Naive thymus-derived CD4-positive, alpha-beta T cell (primary cell): ENCODE measurements at regions of chr17 and their contacts with region 1.

Region 1: DNA sequence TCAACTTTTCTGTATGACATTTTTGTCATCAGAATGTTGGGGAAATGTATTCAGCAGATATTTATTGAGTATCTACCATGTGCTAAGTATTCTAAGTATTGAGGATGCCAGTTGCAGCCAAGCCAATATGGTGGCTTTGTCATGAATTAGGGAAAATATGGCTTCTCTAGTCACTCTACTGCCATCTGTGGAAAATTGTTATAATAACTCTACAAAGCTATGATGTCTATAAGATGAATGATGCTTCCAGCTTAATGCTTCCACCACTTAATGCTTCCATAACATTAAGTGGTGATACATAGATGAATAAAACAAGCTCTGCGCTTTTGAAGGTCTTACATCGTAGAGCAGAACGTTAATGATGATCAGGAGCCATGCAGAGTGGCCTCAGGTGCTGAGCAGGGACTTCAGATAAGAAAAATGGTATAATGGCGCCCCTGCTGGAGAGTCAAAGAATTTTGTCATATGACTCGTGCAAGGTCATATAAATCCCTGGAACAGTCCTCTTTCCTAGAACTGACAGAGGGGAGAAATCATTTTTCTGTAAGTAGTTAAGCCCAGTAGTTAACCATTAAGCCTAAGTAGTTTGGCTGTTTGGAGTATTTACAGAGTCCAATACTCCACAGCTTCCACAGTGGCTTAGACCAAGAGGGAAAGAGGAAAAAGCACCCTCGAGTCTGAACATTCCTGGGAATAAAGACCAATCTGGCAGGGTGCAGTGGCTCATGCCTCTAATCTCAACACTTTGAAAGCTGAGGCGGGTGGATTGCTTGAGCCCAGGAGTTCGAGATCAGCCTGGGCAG is 2.7 kb upstream of the TMIGD1 start:
- DNase-seq: peak; percentile 22 to 80 (median 74)
- ATAC-seq: peak; percentile 63
- H3K4me3 ChIP-seq: no peak overlapping the region
- H3K4me3 Mint-ChIP-seq: no peak overlapping the region
- H3K27ac ChIP-seq: no peak overlapping the region
- H3K27ac Mint-ChIP-seq: peak overlapping the region in 5 of 9 donors; percentile 1 to 69 (median 16)
- H3K4me1 ChIP-seq: peaks cover 11 to 16% of the 10 kb centered on the region in 2 donors
- H3K4me1 Mint-ChIP-seq: peaks cover 13 to 43% (median 36%) of the 10 kb centered on the region in 7 donors
- H3K27me3 ChIP-seq: no peaks in the 10 kb centered on the region
- H3K27me3 Mint-ChIP-seq: peaks cover 0 to 2% (median 0%) of the 10 kb centered on the region in 5 donors

Region 2: GRCh38 chr17:30104575-30105339 is 231.8 kb before region 1 on chr17:
- CTCF ChIA-PET with region 1: interaction called, 47 read pairs
- POLR2A ChIA-PET with region 1: interaction called, 3 read pairs
- intact Hi-C with region 1: loop called (anchors 1 kb)
- DNase-seq: peak; percentile 35 to 67 (median 58)
- ATAC-seq: peak; percentile 98
- H3K4me3 ChIP-seq: peak overlapping the region; percentile 40
- H3K4me3 Mint-ChIP-seq: peak overlapping the region; percentile 74 to 91 (median 84)
- H3K27ac ChIP-seq: no peak overlapping the region
- H3K27ac Mint-ChIP-seq: peak overlapping the region in 5 of 9 donors; percentile 16 to 73 (median 34)
- H3K4me1 ChIP-seq: peaks cover 0 to 7% of the 10 kb centered on the region in 2 donors
- H3K4me1 Mint-ChIP-seq: peaks cover 5 to 7% (median 6%) of the 10 kb centered on the region in 7 donors
- H3K27me3 ChIP-seq: no peaks in the 10 kb centered on the region
- H3K27me3 Mint-ChIP-seq: peaks cover 0 to 29% (median 5%) of the 10 kb centered on the region in 5 donors

Region 3: GRCh38 chr17:30230591-30231125 is 105.9 kb before region 1 on chr17:
- CTCF ChIA-PET with region 1: no interaction called
- POLR2A ChIA-PET with region 1: no interaction called
- intact Hi-C with region 1: no loop called
- DNase-seq: no peak
- ATAC-seq: no peak
- H3K4me3 ChIP-seq: no peak overlapping the region
- H3K4me3 Mint-ChIP-seq: no peak overlapping the region
- H3K27ac ChIP-seq: no peak overlapping the region
- H3K27ac Mint-ChIP-seq: no peak overlapping the region
- H3K4me1 ChIP-seq: peaks cover 0 to under 1% of the 10 kb centered on the region in 2 donors
- H3K4me1 Mint-ChIP-seq: peaks cover 0 to 10% (median 6%) of the 10 kb centered on the region in 7 donors
- H3K27me3 ChIP-seq: peaks cover 0 to 4% of the 10 kb centered on the region in 2 donors
- H3K27me3 Mint-ChIP-seq: peaks cover 38 to 63% (median 54%) of the 10 kb centered on the region in 5 donors

Region 4: GRCh38 chr17:30271102-30271501 is 65.5 kb before region 1 on chr17:
- CTCF ChIA-PET with region 1: interaction called, 4 read pairs
- POLR2A ChIA-PET with region 1: no interaction called
- intact Hi-C with region 1: loop called in 1 of 2 experiments (anchors 2 kb)
- DNase-seq: no peak
- ATAC-seq: no peak
- H3K4me3 ChIP-seq: no peak overlapping the region
- H3K4me3 Mint-ChIP-seq: no peak overlapping the region
- H3K27ac ChIP-seq: no peak overlapping the region
- H3K27ac Mint-ChIP-seq: no peak overlapping the region
- H3K4me1 ChIP-seq: no peaks in the 10 kb centered on the region
- H3K4me1 Mint-ChIP-seq: peaks cover 0 to 5% (median 0%) of the 10 kb centered on the region in 7 donors
- H3K27me3 ChIP-seq: no peaks in the 10 kb centered on the region
- H3K27me3 Mint-ChIP-seq: no peaks in the 10 kb centered on the region

Region 5: DNA sequence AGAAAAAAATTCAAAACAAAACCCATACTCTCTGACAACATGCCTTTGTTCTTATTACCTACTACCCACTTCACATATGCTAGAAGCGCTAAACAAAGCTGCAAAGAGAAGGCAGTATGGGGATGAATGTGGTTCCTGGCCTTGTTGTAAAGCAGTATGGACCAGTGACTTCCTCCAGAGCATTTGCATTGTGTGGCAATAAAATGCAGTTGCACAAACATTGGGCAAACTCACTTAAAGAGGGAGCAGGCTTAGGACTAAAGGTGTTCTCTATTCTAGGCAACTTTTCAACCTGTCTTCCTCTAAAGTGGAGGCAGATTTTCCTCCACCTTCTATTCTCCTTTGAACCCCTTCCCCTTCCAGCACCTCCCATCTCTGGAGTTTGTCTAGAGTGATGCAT is 19.8 kb before region 1 on chr17:
- CTCF ChIA-PET with region 1: interaction called, 37 read pairs
- POLR2A ChIA-PET with region 1: interaction called, 39 read pairs
- intact Hi-C with region 1: no loop called
- DNase-seq: no peak
- ATAC-seq: no peak
- H3K4me3 ChIP-seq: no peak overlapping the region
- H3K4me3 Mint-ChIP-seq: no peak overlapping the region
- H3K27ac ChIP-seq: no peak overlapping the region
- H3K27ac Mint-ChIP-seq: no peak overlapping the region
- H3K4me1 ChIP-seq: no peaks in the 10 kb centered on the region
- H3K4me1 Mint-ChIP-seq: peaks cover 0 to 9% (median 0%) of the 10 kb centered on the region in 7 donors
- H3K27me3 ChIP-seq: no peaks in the 10 kb centered on the region
- H3K27me3 Mint-ChIP-seq: peaks cover 0 to 18% (median 0%) of the 10 kb centered on the region in 5 donors

Region 6: GRCh38 chr17:30378824-30379302 is 42.3 kb after region 1 on chr17 and contains the start of gene CPD:
- CTCF ChIA-PET with region 1: interaction called, 10 read pairs
- POLR2A ChIA-PET with region 1: interaction called, 3 read pairs
- intact Hi-C with region 1: loop called (anchors 1 kb)
- DNase-seq: peak; percentile 93 to 99 (median 97)
- ATAC-seq: peak; percentile 98
- H3K4me3 ChIP-seq: peak within 1 kb of the TSS; percentile 76
- H3K4me3 Mint-ChIP-seq: peak within 1 kb of the TSS; percentile 90 to 99 (median 94)
- H3K27ac ChIP-seq: peak within 1 kb of the TSS; percentile 81
- H3K27ac Mint-ChIP-seq: peak within 1 kb of the TSS; percentile 89 to 98 (median 94)
- H3K4me1 ChIP-seq: peaks cover 20 to 50% of the 10 kb centered on the region in 2 donors
- H3K4me1 Mint-ChIP-seq: peaks cover 36 to 65% (median 55%) of the 10 kb centered on the region in 7 donors
- H3K27me3 ChIP-seq: no peaks in the 10 kb centered on the region
- H3K27me3 Mint-ChIP-seq: no peaks in the 10 kb centered on the region
- total RNA-seq, gene CPD: 16.5 to 52.9 (median 22.6) TPM

Region 7: GRCh38 chr17:30565073-30565935 is 228.7 kb after region 1 on chr17:
- CTCF ChIA-PET with region 1: no interaction called
- POLR2A ChIA-PET with region 1: no interaction called
- intact Hi-C with region 1: no loop called
- DNase-seq: no peak
- ATAC-seq: no peak
- H3K4me3 ChIP-seq: no peak overlapping the region
- H3K4me3 Mint-ChIP-seq: no peak overlapping the region
- H3K27ac ChIP-seq: no peak overlapping the region
- H3K27ac Mint-ChIP-seq: no peak overlapping the region
- H3K4me1 ChIP-seq: no peaks in the 10 kb centered on the region
- H3K4me1 Mint-ChIP-seq: peaks cover 0 to 3% (median 0%) of the 10 kb centered on the region in 7 donors
- H3K27me3 ChIP-seq: no peaks in the 10 kb centered on the region
- H3K27me3 Mint-ChIP-seq: peaks cover 0 to 10% (median 0%) of the 10 kb centered on the region in 5 donors

Region 8: GRCh38 chr17:30824356-30825145 is 488.0 kb after region 1 on chr17 and contains the start of gene CRLF3:
- CTCF ChIA-PET with region 1: interaction called, 5 read pairs
- POLR2A ChIA-PET with region 1: no interaction called
- intact Hi-C with region 1: loop called in 1 of 2 experiments (anchors 2 kb)
- DNase-seq: peak; percentile 88 to 94 (median 92)
- ATAC-seq: peak; percentile 97
- H3K4me3 ChIP-seq: peak within 1 kb of the TSS; percentile 62
- H3K4me3 Mint-ChIP-seq: peak within 1 kb of the TSS; percentile 92 to 100 (median 98)
- H3K27ac ChIP-seq: peak within 1 kb of the TSS; percentile 91
- H3K27ac Mint-ChIP-seq: peak within 1 kb of the TSS; percentile 84 to 99 (median 91)
- H3K4me1 ChIP-seq: peaks cover 23 to 25% of the 10 kb centered on the region in 2 donors
- H3K4me1 Mint-ChIP-seq: peaks cover 25 to 42% (median 36%) of the 10 kb centered on the region in 7 donors
- H3K27me3 ChIP-seq: no peaks in the 10 kb centered on the region
- H3K27me3 Mint-ChIP-seq: no peaks in the 10 kb centered on the region
- total RNA-seq, gene CRLF3: 65.5 to 142 (median 86.7) TPM